Mammary epithelial cell (primary cell): ENCODE measurements at regions of chr3 and their contacts with region 1.

Region 1: GRCh38 chr3:33360136-33360825 is 79.9 kb downstream of the UBP1 start:
- DNase-seq: peak; percentile 88
- H3K4me3 ChIP-seq: peak overlapping the region in 1 of 3 experiments; percentile 26
- H3K27ac ChIP-seq: peak overlapping the region; percentile 97
- H3K4me1 ChIP-seq: peaks cover 51% of the 10 kb centered on the region
- H3K27me3 ChIP-seq: no peaks in the 10 kb centered on the region
- CTCF ChIP-seq: no peak

Region 2: DNA sequence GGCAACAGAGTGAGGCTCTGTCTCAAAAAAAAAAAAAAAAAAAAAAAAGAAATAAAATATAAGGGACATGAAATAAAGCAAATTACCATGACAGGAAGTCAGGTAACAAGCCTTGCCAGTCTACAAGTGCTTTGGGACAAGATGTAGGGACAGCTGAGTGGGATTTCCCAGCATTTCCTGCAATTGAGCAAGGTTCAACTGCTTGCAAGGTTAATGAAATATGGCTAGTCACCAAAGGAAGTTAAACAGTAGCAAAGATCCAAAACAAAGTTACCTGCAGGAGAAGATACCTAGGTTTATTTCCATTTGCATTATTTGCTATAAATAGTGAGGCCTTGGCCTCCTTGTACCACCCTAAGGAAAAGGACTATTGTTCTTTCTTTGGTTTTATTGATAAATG is 697.6 kb before region 1 on chr3:
- CTCF ChIA-PET with region 1: no interaction called
- dilution Hi-C with region 1: no loop called
- in situ Hi-C with region 1: no loop called
- intact Hi-C with region 1: no loop called
- DNase-seq: no peak
- H3K4me3 ChIP-seq: no peak overlapping the region
- H3K27ac ChIP-seq: no peak overlapping the region
- H3K4me1 ChIP-seq: no peaks in the 10 kb centered on the region
- H3K27me3 ChIP-seq: no peaks in the 10 kb centered on the region
- CTCF ChIP-seq: no peak

Region 3: DNA sequence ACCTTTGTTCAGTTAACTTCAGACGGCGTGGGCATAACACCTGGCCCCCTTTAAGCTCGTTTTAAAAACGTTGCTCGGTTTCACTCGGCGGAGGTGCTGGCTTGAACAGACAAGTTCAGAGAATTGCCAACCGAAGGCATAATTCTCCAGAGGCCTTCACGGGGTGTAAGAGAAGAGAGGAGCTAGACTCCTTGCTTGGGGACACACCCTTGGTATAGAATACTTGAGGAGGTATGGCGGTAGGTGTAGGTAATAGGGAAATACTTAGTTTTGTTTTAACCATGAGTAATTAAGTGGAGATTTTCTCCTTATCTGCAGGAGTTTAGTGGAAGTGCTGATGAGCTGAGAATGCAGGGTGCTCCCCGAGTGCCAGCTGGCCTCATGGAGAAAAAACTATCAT is 82.1 kb before region 1 on chr3:
- CTCF ChIA-PET with region 1: no interaction called
- dilution Hi-C with region 1: no loop called
- in situ Hi-C with region 1: no loop called
- intact Hi-C with region 1: loop called (anchors 2 kb)
- DNase-seq: peak; percentile 52
- H3K4me3 ChIP-seq: peak overlapping the region; percentile 87 to 95 (median 92)
- H3K27ac ChIP-seq: peak overlapping the region; percentile 83
- H3K4me1 ChIP-seq: no peaks in the 10 kb centered on the region
- H3K27me3 ChIP-seq: no peaks in the 10 kb centered on the region
- CTCF ChIP-seq: no peak

Region 4: DNA sequence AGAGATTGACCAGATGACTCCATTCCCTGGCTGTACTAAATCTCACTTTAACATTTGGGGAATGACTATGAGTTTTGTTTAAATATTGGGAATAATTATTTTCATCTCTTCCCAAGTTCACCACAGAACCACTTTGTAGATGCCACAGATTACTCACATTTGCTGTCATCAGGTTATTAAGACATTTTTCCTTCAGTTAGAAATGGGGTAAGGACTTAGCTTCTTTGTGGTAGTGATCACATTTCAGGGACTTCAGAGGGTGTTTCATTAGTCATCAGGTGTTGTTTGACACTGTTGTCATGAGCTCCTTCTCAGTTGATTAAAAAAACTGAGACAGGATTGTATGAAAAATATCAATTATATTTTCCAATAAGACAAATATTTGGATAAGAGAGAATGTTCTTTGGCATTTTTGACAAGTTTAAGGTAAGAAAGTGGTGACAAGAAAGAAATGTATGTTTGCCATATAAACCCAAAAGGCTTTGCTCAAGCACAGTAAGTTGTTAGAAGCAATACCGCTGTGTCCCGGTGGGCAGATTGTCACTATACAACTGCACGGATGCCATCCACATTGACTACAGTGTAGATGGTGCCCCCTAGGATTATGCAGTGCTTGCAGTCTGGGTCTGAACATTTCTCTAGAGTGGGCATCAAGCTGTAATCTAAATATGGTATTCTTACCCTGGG is 60.7 kb before region 1 on chr3:
- CTCF ChIA-PET with region 1: interaction called, 3 read pairs
- dilution Hi-C with region 1: loop called (anchors 5 kb)
- in situ Hi-C with region 1: no loop called
- intact Hi-C with region 1: loop called (anchors 1 kb)
- DNase-seq: peak; percentile 84
- H3K4me3 ChIP-seq: no peak overlapping the region
- H3K27ac ChIP-seq: peak overlapping the region; percentile 100
- H3K4me1 ChIP-seq: peaks cover 26% of the 10 kb centered on the region
- H3K27me3 ChIP-seq: no peaks in the 10 kb centered on the region
- CTCF ChIP-seq: no peak